Gastrocnemius medialis (tissue), 4 donors: ENCODE measurements at regions of chr1 and their contacts with region 1.

Region 1: GRCh38 chr1:22025368-22026155 is 24.1 kb downstream of the CELA3A start:
- DNase-seq: peak; percentile 78 to 88
- ATAC-seq: peak; percentile 95 to 96
- H3K4me3 ChIP-seq: peak overlapping the region; percentile 90 to 99 (median 96)
- H3K27ac ChIP-seq: peak overlapping the region; percentile 99 to 100 (median 100)
- H3K4me1 ChIP-seq: peaks cover 11 to 16% of the 10 kb centered on the region in 2 donors
- H3K27me3 ChIP-seq: no peaks in the 10 kb centered on the region
- CTCF ChIP-seq: no peak
- POLR2A ChIP-seq: peak; percentile 83 to 94

Region 2: GRCh38 chr1:21344750-21345443 is 680.7 kb before region 1 on chr1:
- in situ Hi-C with region 1: no loop called
- intact Hi-C with region 1: loop called (anchors 10 kb)
- DNase-seq: no peak
- ATAC-seq: peak; percentile 8 to 32
- H3K4me3 ChIP-seq: peak overlapping the region; percentile 71 to 97 (median 77)
- H3K27ac ChIP-seq: peak overlapping the region; percentile 67 to 89 (median 76)
- H3K4me1 ChIP-seq: peaks cover 2 to 13% of the 10 kb centered on the region in 2 donors
- H3K27me3 ChIP-seq: no peaks in the 10 kb centered on the region
- CTCF ChIP-seq: no peak
- POLR2A ChIP-seq: no peak